Psoas muscle (tissue), 8 donors: ENCODE measurements at regions of chr1 and their contacts with region 1.

Region 1: DNA sequence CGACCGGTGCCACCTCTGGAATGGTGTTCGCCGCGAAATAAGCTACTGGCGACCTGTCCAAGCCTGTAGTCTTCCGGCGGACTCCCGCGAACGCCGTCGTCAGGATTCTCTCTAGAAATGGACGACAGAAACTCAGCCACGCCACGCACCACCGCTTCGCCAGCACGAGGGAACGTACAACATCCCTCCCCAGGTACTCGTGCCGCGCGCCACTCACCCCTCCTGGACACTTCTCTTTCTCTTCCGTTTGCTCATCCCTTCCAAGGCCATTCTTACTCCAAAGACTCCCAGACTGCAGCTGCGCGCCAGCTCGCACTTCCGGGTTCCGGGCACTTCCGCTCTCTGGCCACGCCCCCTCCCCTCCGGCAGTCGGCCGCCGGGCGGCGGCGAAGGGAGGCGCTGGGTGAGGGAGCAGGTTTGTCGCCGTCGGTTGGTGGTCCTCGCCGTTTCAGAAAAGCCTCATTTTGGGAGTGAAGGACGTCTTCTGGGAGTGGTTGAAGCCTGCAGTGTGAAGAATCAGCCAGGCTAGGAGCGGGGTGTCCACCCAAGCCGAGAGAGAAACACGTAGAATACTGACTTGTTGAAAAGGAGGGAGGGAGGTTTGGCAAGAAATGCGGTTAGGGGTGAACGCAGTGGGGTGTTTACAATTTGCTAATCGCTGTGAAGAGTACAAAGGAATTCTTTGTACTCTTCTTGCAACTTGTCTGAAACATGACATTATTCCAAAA is at the start of gene RBM34:
- DNase-seq: peak; percentile 91 to 96
- ATAC-seq: peak; percentile 97 to 99 (median 98)
- H3K4me3 ChIP-seq: peak within 1 kb of the TSS; percentile 82
- H3K27ac ChIP-seq: peak within 1 kb of the TSS; percentile 90
- H3K4me1 ChIP-seq: peaks cover 7% of the 10 kb centered on the region
- H3K27me3 ChIP-seq: no peaks in the 10 kb centered on the region
- CTCF ChIP-seq: peak; percentile 14
- total RNA-seq, gene RBM34: 36.8 to 76.3 (median 56.3) TPM

Region 2: GRCh38 chr1:235105051-235106043 is 55.8 kb before region 1 on chr1:
- intact Hi-C with region 1: loop called in 1 of 2 experiments (anchors 2 kb)
- DNase-seq: no peak
- ATAC-seq: peak in 1 of 4 donors; percentile 3
- H3K4me3 ChIP-seq: no peak overlapping the region
- H3K27ac ChIP-seq: no peak overlapping the region
- H3K4me1 ChIP-seq: peaks cover 3% of the 10 kb centered on the region
- H3K27me3 ChIP-seq: no peaks in the 10 kb centered on the region
- CTCF ChIP-seq: no peak

Region 3: DNA sequence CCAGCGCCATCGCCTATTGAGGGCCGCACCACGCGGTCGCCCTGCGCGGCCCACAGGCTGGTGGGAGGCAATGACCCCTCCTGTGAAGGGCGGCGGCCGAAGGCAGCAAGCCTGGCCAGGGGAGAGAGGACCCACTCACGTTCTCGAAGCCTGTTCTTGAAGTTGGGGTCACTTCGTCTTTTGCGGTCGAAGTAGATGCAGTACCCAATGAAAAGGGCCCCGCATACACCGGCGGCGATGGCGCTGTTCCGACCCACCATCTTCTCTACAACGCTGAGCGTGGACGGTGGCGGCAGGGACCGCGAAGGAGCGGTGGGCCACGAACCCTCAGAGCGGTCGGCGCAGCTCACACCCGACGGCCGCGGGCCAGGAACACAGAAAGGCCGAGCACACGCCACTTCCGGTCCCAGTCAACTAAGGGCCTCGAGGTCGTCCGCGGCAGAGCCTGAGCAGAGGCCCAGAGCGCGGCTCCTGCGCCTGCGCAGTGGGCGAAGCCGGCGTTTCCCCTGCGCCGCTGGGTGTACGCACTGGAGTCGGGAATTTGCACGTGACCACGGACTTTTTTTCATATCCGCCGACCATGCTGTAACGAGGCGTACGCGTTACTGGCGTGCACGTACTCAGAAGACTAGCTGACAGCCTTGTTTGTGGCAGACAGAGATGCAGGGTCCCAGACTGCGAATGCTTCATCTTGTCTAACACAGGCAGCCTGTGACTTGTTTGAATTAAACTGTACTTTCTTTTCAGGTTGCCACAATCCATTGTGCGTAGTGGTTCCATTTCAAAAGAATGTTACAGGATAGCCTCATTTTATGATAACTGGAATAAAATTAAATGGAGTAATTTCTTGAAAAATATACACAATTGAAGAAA is 32.4 kb before region 1 on chr1 and contains the start of gene TOMM20:
- intact Hi-C with region 1: loop called in 1 of 2 experiments (anchors 5 kb)
- DNase-seq: peak; percentile 96 to 98
- ATAC-seq: peak; percentile 97 to 99 (median 98)
- H3K4me3 ChIP-seq: peak within 1 kb of the TSS; percentile 99
- H3K27ac ChIP-seq: peak within 1 kb of the TSS; percentile 91
- H3K4me1 ChIP-seq: peaks cover 13% of the 10 kb centered on the region
- H3K27me3 ChIP-seq: no peaks in the 10 kb centered on the region
- CTCF ChIP-seq: no peak
- total RNA-seq, gene TOMM20: 56.3 to 88.7 (median 66.9) TPM

Region 4: GRCh38 chr1:235239851-235240250 is 78.7 kb after region 1 on chr1:
- intact Hi-C with region 1: no loop called
- DNase-seq: no peak
- ATAC-seq: no peak
- H3K4me3 ChIP-seq: no peak overlapping the region
- H3K27ac ChIP-seq: no peak overlapping the region
- H3K4me1 ChIP-seq: no peaks in the 10 kb centered on the region
- H3K27me3 ChIP-seq: no peaks in the 10 kb centered on the region
- CTCF ChIP-seq: no peak

Region 5: GRCh38 chr1:235357485-235358378 is 196.6 kb after region 1 on chr1:
- intact Hi-C with region 1: no loop called
- DNase-seq: no peak
- ATAC-seq: no peak
- H3K4me3 ChIP-seq: no peak overlapping the region
- H3K27ac ChIP-seq: no peak overlapping the region
- H3K4me1 ChIP-seq: no peaks in the 10 kb centered on the region
- H3K27me3 ChIP-seq: no peaks in the 10 kb centered on the region
- CTCF ChIP-seq: no peak